GM10248 (cell line): ENCODE measurements at regions of chr17 and their contacts with region 1.

Region 1: GRCh38 chr17:67221062-67221998 is 23.7 kb downstream of the HELZ start:
- DNase-seq: peak; percentile 26
- CTCF ChIP-seq: peak; percentile 50

Region 2: GRCh38 chr17:67180275-67180674 is 41.1 kb before region 1 on chr17:
- CTCF ChIA-PET with region 1: no interaction called
- POLR2A ChIA-PET with region 1: no interaction called
- DNase-seq: no peak
- CTCF ChIP-seq: no peak

Region 3: GRCh38 chr17:67239597-67239996 is 18.3 kb after region 1 on chr17:
- CTCF ChIA-PET with region 1: interaction called, 16 read pairs
- POLR2A ChIA-PET with region 1: no interaction called
- DNase-seq: no peak
- CTCF ChIP-seq: no peak

Region 4: DNA sequence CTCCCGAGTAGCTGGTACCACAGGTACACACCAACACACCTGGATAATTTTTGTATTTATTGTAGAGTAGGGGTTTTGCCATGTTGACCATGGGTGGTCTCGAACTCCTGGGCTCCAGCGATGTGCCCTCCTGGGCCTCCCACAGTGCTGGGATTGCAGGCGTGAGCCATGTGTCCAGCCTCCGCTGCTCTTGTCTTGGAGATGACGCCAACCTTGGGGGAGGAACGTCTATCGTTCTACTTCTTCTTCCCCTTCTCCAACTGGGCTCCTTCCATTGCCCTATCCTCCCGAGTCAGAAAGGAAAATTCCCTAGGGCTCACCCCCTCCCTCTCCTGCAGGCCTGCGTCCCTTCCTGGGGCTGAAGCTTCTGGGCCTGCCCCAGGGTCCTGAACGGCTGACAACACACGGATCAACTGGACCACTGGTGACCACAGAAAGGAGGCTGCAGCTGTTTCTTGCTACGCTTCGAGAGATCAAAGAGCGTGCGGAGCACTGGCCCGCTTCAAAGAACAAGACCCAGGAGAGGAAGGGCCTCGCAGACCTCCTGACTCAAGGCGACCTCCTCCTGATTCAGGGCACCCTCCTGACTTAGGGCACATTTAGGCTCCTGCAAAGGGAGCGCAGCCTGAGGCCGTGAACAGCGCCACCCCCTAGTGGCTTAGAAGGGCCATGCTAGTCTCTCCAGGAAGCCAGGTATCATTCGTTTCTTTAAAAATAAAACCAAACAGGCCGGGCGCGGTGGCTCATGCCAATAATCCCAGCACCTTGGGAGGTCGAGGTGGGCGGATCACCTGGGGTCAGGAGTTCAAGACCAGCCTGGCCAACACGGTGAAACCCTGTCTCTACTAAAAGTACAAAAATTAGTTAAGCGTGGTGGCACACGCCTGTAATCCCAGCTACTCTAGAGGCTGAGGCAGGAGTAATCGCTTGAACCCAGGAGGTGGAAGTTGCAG is 72.2 kb after region 1 on chr17:
- CTCF ChIA-PET with region 1: interaction called, 16 read pairs
- POLR2A ChIA-PET with region 1: no interaction called
- DNase-seq: peak; percentile 85
- CTCF ChIP-seq: peak; percentile 85

Region 5: DNA sequence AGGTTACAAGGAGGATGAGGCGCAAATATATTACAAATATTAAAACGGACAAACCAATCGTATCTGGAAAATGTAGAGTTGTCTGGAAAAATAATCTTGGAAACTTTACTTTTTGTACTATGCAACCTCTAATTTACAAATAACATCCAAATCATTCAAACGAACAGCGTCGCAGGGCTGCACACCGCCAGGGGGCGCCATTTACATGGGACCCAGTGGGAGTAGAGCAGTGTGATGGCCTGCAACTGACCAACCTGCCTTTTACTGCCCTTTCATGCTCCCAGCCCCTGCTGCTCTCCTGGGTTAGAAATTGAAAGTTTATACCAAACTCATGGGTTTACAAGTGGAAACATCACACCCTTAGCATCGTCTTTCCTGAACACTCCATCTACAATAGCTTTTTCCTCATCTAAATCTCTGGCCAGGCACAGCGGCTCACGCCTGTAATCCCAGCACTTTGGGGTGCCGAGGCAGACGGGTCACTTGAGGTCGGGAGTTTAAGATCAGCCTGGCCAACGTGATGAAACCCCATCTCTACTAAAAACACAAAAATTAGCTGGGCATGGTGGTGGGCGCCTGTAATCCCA is 165.7 kb after region 1 on chr17:
- CTCF ChIA-PET with region 1: no interaction called
- POLR2A ChIA-PET with region 1: no interaction called
- DNase-seq: no peak
- CTCF ChIP-seq: peak; percentile 51